T-cell (primary cell): ENCODE measurements at regions of chr11 and their contacts with region 1.

Region 1: DNA sequence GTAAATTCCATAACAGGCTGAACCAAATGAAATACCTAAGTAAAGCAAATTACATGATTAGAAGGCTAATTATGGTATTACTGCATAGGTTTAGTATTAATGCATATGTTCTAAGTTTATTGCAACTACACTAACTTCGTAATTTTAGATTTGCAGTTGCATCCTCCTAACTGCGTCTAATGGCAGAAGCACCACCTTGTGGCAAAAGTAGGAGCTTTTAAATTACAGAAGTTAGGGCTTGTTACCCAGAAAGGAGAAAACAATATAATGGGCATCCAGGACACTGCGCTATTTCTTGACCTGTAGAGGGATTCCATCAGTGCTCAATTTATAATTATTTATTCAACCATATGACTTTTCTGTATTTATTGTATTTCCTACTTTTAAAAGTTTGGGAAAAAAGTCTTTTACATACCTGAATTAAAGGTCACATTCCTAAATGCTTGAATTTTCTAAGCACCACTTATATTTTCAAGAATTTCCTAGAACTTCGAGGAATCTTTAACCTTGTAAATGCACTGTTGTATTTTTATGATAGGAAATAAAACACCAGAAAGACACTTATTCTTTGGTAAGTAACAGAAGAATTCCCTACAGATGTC is 16.3 kb upstream of the GPR83 start:
- DNase-seq: peak in 1 of 35 experiments; percentile 3
- ATAC-seq: no peak
- H3K4me3 ChIP-seq: no peak overlapping the region
- H3K4me3 Mint-ChIP-seq: no peak overlapping the region
- H3K27ac ChIP-seq: no peak overlapping the region
- H3K27ac Mint-ChIP-seq: no peak overlapping the region
- H3K4me1 ChIP-seq: no peaks in the 10 kb centered on the region
- H3K4me1 Mint-ChIP-seq: no peaks in the 10 kb centered on the region
- H3K27me3 ChIP-seq: no peaks in the 10 kb centered on the region
- H3K27me3 Mint-ChIP-seq: no peaks in the 10 kb centered on the region

Region 2: GRCh38 chr11:92838759-92839310 is 1578.7 kb before region 1 on chr11:
- CTCF ChIA-PET with region 1: no interaction called
- POLR2A ChIA-PET with region 1: no interaction called
- DNase-seq: no peak
- ATAC-seq: no peak
- H3K4me3 ChIP-seq: no peak overlapping the region
- H3K4me3 Mint-ChIP-seq: no peak overlapping the region
- H3K27ac ChIP-seq: no peak overlapping the region
- H3K27ac Mint-ChIP-seq: no peak overlapping the region
- H3K4me1 ChIP-seq: no peaks in the 10 kb centered on the region
- H3K4me1 Mint-ChIP-seq: no peaks in the 10 kb centered on the region
- H3K27me3 ChIP-seq: no peaks in the 10 kb centered on the region
- H3K27me3 Mint-ChIP-seq: no peaks in the 10 kb centered on the region

Region 3: DNA sequence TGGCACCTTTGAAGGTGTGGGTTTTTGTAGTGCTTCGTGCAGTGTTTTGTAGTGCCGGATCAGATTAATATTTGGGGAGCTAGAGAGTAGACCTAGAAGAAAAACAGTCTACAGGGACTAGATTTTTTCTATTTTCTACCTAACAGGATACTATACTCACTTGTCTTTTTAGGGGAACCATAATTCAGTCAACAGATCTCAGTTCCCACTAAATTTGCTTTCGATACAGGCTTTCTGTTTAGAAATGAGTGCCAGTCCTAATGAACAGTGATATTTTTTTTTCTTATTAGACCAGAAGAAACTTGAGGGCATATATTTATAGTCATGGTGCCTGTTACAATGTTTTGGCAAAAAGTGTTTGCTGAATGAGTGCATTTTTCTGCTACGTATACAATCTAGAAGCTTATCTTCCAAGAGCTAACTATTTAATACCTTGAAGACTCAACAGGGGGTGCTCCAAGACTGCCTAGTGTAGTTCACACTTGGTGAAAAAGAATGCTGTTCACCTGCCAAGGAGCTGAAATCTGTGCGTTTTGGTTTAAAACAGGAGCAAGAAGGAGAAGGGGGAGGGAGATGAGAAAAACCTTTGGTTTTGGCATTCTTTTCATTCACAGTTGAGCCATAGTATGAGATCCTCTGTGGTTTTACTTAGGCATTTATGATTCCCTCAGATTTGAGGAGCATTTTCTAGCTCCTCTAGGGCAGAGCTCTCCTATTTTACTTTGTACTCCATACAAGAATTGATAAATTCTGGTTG is 522.2 kb before region 1 on chr11:
- CTCF ChIA-PET with region 1: interaction called in 1 of 2 experiments, 11 read pairs
- POLR2A ChIA-PET with region 1: no interaction called
- DNase-seq: peak in 7 of 35 experiments; percentile 0 to 53 (median 4)
- ATAC-seq: no peak
- H3K4me3 ChIP-seq: no peak overlapping the region
- H3K4me3 Mint-ChIP-seq: no peak overlapping the region
- H3K27ac ChIP-seq: no peak overlapping the region
- H3K27ac Mint-ChIP-seq: no peak overlapping the region
- H3K4me1 ChIP-seq: no peaks in the 10 kb centered on the region
- H3K4me1 Mint-ChIP-seq: no peaks in the 10 kb centered on the region
- H3K27me3 ChIP-seq: peaks cover 0 to 20% of the 10 kb centered on the region in 2 experiments
- H3K27me3 Mint-ChIP-seq: peaks cover 31 to 45% of the 10 kb centered on the region in 2 donors

Region 4: DNA sequence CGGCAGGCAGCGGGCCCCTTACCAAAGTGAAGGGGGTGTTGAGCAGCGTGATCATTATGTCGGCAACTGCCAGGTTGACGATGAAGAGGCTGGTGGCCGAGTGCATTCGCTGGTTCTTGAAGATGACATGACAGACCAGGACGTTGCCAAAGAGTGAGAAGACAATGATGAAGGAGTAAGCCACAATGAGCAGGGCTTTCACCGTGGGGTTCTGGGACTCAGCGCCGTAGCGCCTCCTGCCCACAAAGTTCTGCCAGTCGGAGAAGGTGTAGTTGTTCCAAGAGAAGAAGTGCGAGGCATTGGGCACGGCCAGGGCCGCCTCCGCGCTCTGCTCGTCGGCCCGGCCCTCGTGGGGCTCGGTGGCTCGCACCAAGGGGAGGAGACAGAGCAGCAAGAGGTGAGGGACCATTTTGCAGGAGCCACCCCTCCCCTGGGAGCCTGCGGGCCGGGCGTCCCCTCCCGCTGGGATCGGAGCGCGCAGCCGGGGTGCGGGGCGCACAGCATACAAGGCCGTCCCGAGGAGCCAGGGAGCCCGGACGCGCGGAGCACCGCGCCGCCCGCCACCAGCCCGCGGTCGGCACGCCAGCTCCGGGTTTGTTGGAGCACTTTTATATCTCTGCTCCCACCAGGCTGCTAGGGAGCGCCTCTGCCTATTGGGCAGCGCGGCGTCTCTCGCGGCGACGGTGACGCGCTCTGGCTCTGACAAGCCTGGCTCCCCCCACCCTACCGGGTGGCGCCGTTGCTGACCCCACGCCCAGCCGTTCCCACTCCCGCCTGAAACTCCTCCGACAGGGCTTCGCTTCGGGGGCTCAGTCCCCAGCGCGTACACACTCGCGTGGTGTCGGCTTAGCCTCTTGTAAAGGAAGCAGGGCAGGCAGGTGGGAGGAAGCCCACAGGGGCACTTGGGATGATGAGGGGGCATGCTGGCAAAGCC is 16.4 kb before region 1 on chr11 and contains the start of gene GPR83:
- CTCF ChIA-PET with region 1: no interaction called
- POLR2A ChIA-PET with region 1: no interaction called
- DNase-seq: no peak
- ATAC-seq: no peak
- H3K4me3 ChIP-seq: no peak within 1 kb of the TSS
- H3K4me3 Mint-ChIP-seq: peak within 1 kb of the TSS in 1 of 3 donors; percentile 46
- H3K27ac ChIP-seq: no peak within 1 kb of the TSS
- H3K27ac Mint-ChIP-seq: peak within 1 kb of the TSS in 1 of 2 donors; percentile 69
- H3K4me1 ChIP-seq: peaks cover 0 to 4% of the 10 kb centered on the region in 2 experiments
- H3K4me1 Mint-ChIP-seq: peaks cover 5 to 10% (median 9%) of the 10 kb centered on the region in 3 donors
- H3K27me3 ChIP-seq: peaks cover 8 to 41% of the 10 kb centered on the region in 2 experiments
- H3K27me3 Mint-ChIP-seq: peaks cover 50% of the 10 kb centered on the region in 2 donors
- total RNA-seq, gene GPR83: 0.06 to 0.16 (median 0.12) TPM in 4 of 5 donors, not detected in the other

Region 5: GRCh38 chr11:94469416-94469815 is 51.9 kb after region 1 on chr11:
- CTCF ChIA-PET with region 1: no interaction called
- POLR2A ChIA-PET with region 1: no interaction called
- DNase-seq: no peak
- ATAC-seq: no peak
- H3K4me3 ChIP-seq: no peak overlapping the region
- H3K4me3 Mint-ChIP-seq: no peak overlapping the region
- H3K27ac ChIP-seq: no peak overlapping the region
- H3K27ac Mint-ChIP-seq: no peak overlapping the region
- H3K4me1 ChIP-seq: peaks cover 0 to 6% of the 10 kb centered on the region in 2 experiments
- H3K4me1 Mint-ChIP-seq: peaks cover 4 to 20% (median 13%) of the 10 kb centered on the region in 3 donors
- H3K27me3 ChIP-seq: no peaks in the 10 kb centered on the region
- H3K27me3 Mint-ChIP-seq: no peaks in the 10 kb centered on the region

Region 6: DNA sequence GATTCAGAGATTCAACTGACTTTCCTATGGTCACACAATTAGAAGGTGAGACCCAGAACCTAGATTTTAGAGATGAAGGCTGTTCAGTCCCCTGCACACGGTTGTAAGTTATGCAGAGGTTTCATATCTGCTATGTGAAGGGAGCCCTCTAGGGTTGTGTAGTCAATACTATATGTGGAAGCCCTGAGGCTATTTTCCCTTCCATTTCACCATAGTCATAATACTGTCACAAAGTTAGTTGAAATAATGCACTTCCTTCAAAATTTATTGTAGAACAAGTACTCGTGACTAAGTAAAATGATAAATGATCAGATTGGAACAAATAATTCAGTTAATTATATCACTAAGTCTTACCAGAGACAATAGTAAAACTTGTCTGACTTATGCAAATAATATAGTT is 721.0 kb after region 1 on chr11:
- CTCF ChIA-PET with region 1: no interaction called
- POLR2A ChIA-PET with region 1: no interaction called
- DNase-seq: no peak
- ATAC-seq: peak in 2 of 4 experiments; percentile 63 to 65
- H3K4me3 ChIP-seq: no peak overlapping the region
- H3K4me3 Mint-ChIP-seq: no peak overlapping the region
- H3K27ac ChIP-seq: no peak overlapping the region
- H3K27ac Mint-ChIP-seq: no peak overlapping the region
- H3K4me1 ChIP-seq: no peaks in the 10 kb centered on the region
- H3K4me1 Mint-ChIP-seq: no peaks in the 10 kb centered on the region
- H3K27me3 ChIP-seq: peaks cover 0 to 2% of the 10 kb centered on the region in 2 experiments
- H3K27me3 Mint-ChIP-seq: peaks cover 3 to 8% of the 10 kb centered on the region in 2 donors